GM18951 (cell line): ENCODE measurements at regions of chr3 and their contacts with region 1.

Region 1: DNA sequence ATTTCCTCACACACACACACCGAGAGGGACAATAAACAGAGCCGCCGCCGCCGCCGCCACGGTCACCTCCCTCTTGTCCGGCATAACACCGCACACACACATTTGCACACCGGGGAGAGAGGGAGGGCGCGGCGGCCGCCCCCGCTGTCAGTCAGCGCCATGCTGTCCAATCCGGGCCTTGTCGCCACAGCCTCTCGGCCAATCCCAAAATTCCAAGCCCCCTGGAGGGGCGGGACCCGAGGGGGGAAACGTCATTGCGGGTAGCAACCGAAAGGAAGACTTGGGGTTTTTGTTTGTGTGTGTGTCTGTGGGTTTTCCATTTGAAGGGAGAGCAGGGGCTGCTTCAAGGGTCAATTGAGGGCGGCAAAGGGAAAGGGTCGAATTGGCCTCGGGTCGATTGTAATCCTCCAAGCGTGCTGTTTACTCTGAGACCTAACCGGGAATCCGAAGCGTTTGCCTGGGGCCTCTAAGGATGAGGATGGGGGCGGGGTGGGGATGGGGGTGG is at the start of gene TOP2B:
- POLR2A ChIP-seq: peak; percentile 60

Region 2: DNA sequence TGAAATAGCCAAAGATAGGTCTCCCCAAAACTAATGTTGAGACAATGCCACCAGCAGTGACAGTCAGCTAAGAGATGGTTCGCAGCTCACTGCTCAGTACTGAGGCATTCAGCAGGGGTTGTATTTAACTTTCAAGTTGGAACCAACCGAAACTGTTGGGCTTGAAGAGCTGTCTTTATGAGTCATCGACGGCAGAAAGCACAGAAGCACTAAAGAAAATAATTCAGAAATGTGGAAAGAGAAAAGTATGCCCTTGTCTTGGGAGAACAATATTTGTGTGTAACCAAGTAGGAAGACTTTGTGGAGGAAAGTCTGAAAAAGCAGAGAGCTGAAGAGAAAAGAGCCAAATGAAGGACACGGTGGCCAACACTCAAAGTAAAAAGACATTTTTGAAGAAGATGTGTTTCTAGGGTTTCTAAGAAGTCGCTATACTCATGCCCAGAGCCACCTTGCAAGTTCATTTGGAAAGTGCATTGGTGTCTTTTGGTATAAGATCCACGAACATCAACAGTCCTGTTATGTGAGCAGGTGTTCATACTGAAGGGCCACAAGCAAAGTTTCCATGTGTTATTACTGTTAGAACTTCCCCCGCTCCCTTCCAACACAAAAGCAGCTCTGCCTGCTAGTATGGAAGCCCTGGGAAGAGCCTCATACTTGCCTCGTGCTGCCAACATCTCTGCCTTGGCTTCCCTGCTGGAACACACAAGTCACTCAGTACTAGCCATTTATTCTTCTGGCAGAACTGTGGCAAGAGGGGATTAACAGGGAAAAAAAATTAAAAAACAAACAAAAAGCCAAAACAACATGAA is 240.9 kb before region 1 on chr3:
- in situ Hi-C with region 1: no loop called
- POLR2A ChIP-seq: no peak

Region 3: GRCh38 chr3:25856902-25857518 is 192.1 kb after region 1 on chr3:
- in situ Hi-C with region 1: loop called (anchors 25 kb)
- POLR2A ChIP-seq: no peak

Region 4: GRCh38 chr3:26712211-26713026 is 1047.6 kb after region 1 on chr3:
- in situ Hi-C with region 1: loop called (anchors 25 kb)
- POLR2A ChIP-seq: no peak